ENCODE measurements at regions of chr7 and their contacts with region 1.

Region 1: GRCh38 chr7:107344799-107345198 is 125.1 kb upstream of the GPR22 start:
- DNase-seq: no peak
- H3K4me3 ChIP-seq: no peak overlapping the region
- H3K27ac ChIP-seq: no peak overlapping the region
- H3K4me1 ChIP-seq: peaks cover 8% of the 10 kb centered on the region
- CTCF ChIP-seq: no peak

Region 2: DNA sequence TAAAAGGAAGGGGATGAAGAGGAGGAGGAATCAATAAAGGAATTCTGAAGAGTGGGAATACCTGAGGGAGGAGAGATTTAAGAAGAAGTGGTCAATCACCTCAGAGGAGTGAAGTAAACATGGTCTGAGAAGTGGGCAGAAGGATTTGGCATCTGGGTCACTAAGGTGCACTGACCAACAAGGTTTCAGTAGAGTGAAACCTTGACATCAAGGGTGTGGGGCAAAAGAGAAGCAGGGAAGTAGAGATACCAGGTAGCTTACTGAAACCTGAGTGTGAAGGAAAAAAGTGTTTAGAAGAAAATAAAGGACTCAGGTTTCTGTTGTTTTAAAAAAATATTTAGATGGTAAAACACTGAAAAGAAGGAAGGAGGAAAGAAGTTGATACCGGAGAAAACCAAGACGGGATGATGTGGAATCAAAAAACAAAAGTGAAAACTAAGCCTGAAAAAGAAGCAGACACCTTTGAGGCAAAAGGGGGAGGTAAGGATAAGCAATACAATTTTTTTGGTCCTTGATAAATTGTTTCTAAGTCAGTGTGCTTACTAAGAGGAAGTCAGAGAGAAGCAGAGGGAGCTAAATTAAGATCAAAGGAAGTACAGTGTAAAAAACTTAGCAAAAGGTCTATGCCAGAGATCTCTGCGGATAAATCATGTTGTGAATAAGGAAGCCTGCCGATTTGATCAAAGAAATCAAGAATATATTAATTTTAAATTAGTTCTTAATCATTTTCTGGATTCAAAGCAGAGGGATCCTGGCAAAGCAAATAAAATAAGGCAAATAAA is 12.1 kb before region 1 on chr7:
- CTCF ChIA-PET with region 1: no interaction called
- POLR2A ChIA-PET with region 1: interaction called, 11 read pairs
- intact Hi-C with region 1: no loop called
- DNase-seq: peak; percentile 77
- H3K4me3 ChIP-seq: peak overlapping the region; percentile 37
- H3K27ac ChIP-seq: peak overlapping the region; percentile 38
- H3K4me1 ChIP-seq: peaks cover 22% of the 10 kb centered on the region
- CTCF ChIP-seq: no peak